Activated naive CD8-positive, alpha-beta T cell treated with anti-CD3 and anti-CD28 coated beads, Interleukin-2, amount 10 ng/mL, durations not matched to agents 7 days and 5 days (primary cell): ENCODE measurements at regions of chr4 and their contacts with region 1.

Region 1: GRCh38 chr4:89368861-89369260 is 61.3 kb upstream of the GPRIN3 start:
- DNase-seq: no peak
- ATAC-seq: no peak
- H3K4me3 Mint-ChIP-seq: no peak overlapping the region
- H3K27ac Mint-ChIP-seq: no peak overlapping the region
- H3K4me1 Mint-ChIP-seq: peaks cover 7% of the 10 kb centered on the region
- H3K27me3 Mint-ChIP-seq: no peaks in the 10 kb centered on the region

Region 2: DNA sequence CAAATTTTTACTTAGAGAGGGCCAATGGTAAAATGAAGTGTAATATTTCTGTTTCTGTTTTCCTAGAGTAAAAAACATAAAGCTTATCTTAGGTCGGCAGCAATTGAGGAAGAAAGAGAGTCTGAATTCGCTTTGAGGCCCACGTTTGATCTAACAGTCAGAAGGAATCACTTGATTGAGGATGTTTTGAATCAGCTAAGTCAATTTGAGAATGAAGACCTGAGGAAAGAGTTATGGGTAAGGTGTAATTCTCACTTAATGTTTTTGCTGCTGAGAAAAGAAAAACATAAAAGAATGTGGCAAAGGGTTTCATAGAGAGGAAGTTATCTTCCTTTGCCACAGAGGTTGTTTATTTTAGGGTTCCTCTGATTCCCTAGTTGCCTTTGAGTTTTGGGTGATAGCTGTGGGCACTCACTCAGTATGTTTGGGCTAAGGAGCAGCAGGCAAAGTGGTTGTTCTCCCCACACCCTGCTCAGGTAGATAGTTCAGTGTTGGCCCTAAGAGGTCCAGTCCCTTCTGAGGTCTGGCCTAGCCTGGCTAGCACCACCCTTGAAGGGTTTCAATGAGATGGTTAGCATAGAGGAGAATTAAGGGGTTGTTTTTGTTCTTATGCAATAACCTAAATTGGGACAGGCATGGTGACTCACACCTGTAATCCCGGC is 879.6 kb before region 1 on chr4:
- POLR2A ChIA-PET with region 1: interaction called, 10 read pairs
- DNase-seq: no peak
- ATAC-seq: peak; percentile 56
- H3K4me3 Mint-ChIP-seq: peak overlapping the region; percentile 7
- H3K27ac Mint-ChIP-seq: peak overlapping the region; percentile 72
- H3K4me1 Mint-ChIP-seq: peaks cover 13% of the 10 kb centered on the region
- H3K27me3 Mint-ChIP-seq: no peaks in the 10 kb centered on the region